ENCODE measurements at regions of chr10 and their contacts with region 1.

Region 1: GRCh38 chr10:79068562-79069324 is at the start of gene ZMIZ1:
- DNase-seq: peak; percentile 77
- H3K4me3 Mint-ChIP-seq: peak within 1 kb of the TSS; percentile 91
- H3K27ac Mint-ChIP-seq: peak within 1 kb of the TSS; percentile 86
- H3K4me1 Mint-ChIP-seq: peaks cover 43% of the 10 kb centered on the region
- H3K27me3 Mint-ChIP-seq: peaks cover 16% of the 10 kb centered on the region
- total RNA-seq, gene ZMIZ1: 67.6 and 67.8 TPM in 2 replicates

Region 2: DNA sequence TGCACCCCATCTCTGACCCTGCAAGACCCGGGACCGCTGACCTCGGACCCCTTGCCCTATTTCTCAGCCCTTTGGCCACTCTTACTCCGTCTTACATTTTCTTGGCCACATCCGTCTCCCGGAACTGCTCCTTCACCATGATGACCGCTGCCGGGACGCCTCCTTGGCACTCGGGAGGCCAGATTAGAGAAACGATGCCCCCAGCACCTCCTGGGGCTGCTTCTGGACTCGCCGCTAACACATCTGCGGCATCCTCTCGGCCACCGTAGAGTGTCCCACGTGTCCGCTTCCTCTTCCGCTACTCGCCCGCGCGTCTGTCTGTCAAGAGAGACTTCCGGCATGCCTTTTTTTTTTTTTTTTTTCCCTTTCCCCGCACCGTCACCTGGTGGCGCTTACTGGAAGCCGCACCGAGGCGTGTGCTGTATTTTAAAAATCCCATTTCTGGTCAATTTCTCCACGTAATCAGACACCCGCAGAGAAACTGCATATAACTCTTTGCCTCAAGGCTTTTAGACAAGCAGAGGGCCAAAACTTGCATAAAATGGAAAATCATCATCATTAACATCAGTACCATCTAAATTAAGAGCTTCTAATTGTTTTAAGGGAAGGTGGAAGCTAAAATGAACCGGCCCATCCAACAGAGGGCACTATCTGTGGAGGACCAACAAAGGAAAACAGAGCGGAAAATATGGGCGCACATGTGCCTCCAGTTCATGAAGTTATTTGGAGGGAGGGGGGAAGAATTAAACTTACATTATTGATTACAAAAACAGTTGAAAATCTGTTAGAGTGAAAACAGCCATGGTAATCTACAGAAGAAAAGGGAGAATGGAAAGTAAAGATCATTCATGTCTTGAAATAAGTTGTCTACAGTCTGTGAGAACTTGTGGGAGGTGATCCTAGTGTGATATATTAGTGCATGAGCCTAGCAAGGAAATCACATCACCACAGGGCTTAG is 1039.2 kb before region 1 on chr10 and contains the start of gene POLR3A:
- intact Hi-C with region 1: loop called (anchors 5 kb)
- DNase-seq: peak; percentile 89
- H3K4me3 Mint-ChIP-seq: peak within 1 kb of the TSS; percentile 99
- H3K27ac Mint-ChIP-seq: peak within 1 kb of the TSS; percentile 91
- H3K4me1 Mint-ChIP-seq: peaks cover 28% of the 10 kb centered on the region
- H3K27me3 Mint-ChIP-seq: no peaks in the 10 kb centered on the region
- total RNA-seq, gene POLR3A: 29.5 and 30.8 TPM in 2 replicates

Region 3: DNA sequence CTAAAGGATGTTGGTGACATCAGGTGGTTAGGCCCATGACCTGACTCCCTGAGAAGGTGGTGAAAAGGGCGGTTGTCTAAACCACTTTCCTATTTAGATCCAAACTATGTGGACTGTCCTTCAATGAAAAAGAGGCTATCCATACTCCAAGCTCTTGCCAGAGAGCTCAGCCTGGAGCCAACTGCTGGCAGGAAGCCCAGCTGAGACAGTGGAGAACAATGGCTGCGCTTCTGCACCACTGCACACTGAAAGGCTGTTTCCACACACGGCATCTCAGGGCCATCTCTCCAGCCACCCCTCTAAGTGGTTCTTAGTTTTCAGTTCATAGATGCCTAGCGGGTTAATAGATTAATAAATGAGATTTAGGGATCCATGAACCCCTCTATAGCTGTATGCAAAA is 488.7 kb before region 1 on chr10:
- intact Hi-C with region 1: loop called (anchors 1 kb)
- DNase-seq: no peak
- H3K4me3 Mint-ChIP-seq: no peak overlapping the region
- H3K27ac Mint-ChIP-seq: peak overlapping the region; percentile 92
- H3K4me1 Mint-ChIP-seq: peaks cover 17% of the 10 kb centered on the region
- H3K27me3 Mint-ChIP-seq: no peaks in the 10 kb centered on the region

Region 4: GRCh38 chr10:78830062-78830975 is 238.4 kb before region 1 on chr10:
- intact Hi-C with region 1: no loop called
- DNase-seq: no peak
- H3K4me3 Mint-ChIP-seq: no peak overlapping the region
- H3K27ac Mint-ChIP-seq: no peak overlapping the region
- H3K4me1 Mint-ChIP-seq: no peaks in the 10 kb centered on the region
- H3K27me3 Mint-ChIP-seq: peaks cover 4% of the 10 kb centered on the region

Region 5: DNA sequence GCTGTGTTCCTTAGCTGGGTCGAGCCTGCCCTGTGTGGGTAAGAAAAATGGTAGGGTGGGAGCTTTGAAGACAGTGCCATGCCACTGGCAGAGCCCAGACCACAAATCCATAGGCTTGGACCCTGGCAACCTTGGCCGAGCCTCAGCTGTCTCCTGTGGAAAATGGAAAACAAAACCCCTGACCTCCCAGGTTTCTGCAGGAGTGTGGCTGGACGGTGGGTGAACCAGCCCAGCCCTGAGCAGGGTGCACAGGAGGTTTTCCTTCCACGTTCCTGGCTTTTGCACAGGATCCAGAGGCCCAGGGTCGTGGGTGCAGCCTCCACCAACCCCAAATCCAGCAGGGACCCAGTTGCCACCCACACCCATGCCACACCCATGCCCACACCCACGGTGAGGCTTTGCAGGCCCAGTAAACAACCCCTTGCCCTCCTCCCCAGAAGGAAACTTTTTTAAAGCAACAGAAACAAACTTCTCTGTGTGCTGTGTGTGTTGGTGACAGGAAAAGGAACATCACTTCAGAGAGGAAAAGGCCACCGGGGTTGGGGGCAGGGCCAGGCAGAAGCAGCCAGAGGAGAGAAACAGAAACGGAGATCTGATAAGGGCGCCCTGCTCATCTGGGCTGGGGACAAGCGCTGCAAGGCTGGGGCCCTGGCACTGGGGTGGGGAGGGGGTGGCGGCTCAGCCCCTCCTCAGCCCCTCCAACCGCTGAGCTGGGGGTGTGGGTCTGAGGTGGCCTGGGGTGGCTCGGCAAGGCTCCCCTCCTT is 20.7 kb before region 1 on chr10:
- intact Hi-C with region 1: loop called (anchors 1 kb)
- DNase-seq: peak; percentile 68
- H3K4me3 Mint-ChIP-seq: peak overlapping the region; percentile 72
- H3K27ac Mint-ChIP-seq: peak overlapping the region; percentile 94
- H3K4me1 Mint-ChIP-seq: peaks cover 40% of the 10 kb centered on the region
- H3K27me3 Mint-ChIP-seq: peaks cover 7% of the 10 kb centered on the region

Region 6: DNA sequence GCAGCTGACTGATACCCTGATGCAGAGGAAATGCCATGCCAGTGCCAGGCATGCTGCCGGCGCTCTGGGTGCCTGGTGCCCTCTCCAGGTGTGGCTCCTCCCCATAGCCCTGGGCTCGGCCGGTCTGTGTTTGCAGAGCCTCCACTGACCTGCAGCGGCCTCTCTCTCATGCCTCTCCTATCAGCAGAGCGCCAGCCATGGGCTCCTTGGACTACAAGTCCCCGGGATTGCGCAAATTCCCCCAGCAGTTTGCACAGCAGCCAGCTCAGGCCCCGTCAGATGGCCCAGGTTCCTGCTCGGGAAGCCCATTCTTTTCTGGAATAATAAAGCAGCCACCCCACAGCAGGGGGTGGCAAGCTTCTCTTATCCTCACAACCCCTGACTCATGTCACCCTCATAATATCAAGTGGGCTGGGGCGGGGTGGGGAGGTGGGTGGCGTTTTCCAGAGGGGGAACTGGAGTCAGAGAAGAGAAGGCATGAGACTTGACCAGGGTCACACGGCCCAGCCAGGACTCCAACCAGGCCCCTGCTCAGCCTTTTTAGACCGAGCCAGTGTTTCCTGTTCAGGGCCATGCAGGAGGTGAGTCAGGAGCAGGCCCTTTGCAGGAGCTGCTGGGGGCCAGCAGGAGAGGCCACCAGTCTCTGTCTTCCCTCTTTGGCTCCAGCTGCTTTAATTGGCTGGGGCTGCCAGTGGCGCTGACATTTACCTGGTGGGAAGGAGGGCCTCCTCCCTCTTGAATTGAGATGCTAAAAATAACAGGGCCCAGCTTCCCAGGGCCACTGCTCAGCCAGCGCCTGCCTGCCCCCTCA is 58.6 kb after region 1 on chr10:
- intact Hi-C with region 1: no loop called
- DNase-seq: no peak
- H3K4me3 Mint-ChIP-seq: no peak overlapping the region
- H3K27ac Mint-ChIP-seq: no peak overlapping the region
- H3K4me1 Mint-ChIP-seq: no peaks in the 10 kb centered on the region
- H3K27me3 Mint-ChIP-seq: no peaks in the 10 kb centered on the region

Region 7: GRCh38 chr10:79149662-79150443 is 81.1 kb after region 1 on chr10:
- intact Hi-C with region 1: no loop called
- DNase-seq: peak; percentile 51
- H3K4me3 Mint-ChIP-seq: no peak overlapping the region
- H3K27ac Mint-ChIP-seq: peak overlapping the region; percentile 29
- H3K4me1 Mint-ChIP-seq: peaks cover 48% of the 10 kb centered on the region
- H3K27me3 Mint-ChIP-seq: no peaks in the 10 kb centered on the region

Region 8: DNA sequence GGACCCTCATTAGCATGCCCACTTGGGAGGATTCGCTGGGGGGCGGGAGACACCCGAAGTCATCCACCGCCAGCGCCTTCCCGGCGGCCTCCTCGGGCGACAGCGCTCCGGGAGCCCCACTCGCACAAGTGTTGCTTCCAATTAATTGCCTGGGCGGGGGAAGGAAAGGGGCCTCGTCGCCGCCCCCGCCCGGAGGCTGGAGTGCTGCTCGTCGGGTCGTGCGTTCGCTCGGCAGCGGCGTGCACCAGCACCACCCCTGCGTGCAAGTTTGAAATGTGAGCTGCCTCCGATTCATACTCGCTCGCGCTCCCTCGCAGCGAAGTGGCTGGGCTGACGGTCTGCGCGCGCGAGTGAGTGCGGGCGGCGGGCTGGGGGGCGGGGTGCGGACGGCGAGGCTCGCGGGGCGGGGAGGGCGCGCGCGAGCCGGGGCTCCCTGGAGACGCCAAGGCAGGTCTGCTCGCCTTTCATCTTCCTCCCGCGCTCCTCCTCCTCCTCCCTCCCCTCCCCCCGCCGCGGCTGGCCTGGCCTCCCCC is 173.9 kb after region 1 on chr10:
- intact Hi-C with region 1: loop called (anchors 1 kb)
- DNase-seq: peak; percentile 65
- H3K4me3 Mint-ChIP-seq: peak overlapping the region; percentile 81
- H3K27ac Mint-ChIP-seq: peak overlapping the region; percentile 83
- H3K4me1 Mint-ChIP-seq: peaks cover 71% of the 10 kb centered on the region
- H3K27me3 Mint-ChIP-seq: no peaks in the 10 kb centered on the region

Region 9: DNA sequence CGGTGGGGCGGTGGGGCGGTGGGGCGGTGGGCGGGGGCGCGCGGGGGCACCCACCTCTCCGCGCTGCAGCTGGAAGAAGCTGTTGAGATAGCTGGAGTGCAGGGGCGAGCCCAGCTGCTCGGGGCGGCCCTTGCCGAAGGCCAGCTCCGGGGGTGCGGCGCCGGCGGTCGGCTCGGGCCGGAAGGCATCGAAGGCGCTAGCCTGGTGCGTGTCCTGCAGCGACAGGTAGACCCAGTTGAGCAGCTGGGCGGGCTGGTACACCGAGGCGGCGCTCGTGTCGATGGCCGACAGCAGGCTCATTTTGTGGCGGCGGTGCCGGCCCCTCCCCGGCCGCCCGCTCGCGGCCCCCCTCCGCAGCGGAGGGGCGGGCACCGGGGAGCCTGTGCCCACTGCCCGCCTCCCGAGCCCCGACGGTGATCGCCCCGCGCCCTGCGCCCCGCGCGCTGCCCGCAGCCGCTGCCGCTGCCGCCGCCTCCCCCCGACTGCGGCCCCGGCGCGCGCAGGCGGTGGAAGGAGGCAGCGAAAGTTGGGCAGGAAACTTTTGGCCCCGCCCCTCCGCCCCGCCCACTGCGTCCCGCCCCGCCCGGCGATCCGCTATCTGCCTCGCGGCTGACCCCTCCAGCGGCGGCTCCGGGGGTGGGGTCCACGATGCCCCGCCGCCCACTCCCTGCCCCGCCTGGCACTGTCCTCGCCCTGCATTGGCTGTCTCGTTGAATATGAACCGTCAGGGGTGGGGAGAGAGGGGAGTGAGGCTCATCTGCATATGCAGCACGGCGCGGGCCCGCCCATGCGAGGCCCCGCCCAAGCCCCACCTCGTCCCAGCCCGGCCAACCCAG is 376.6 kb after region 1 on chr10 and contains the start of gene ZCCHC24:
- intact Hi-C with region 1: loop called (anchors 5 kb)
- DNase-seq: peak; percentile 91
- H3K4me3 Mint-ChIP-seq: peak within 1 kb of the TSS; percentile 87
- H3K27ac Mint-ChIP-seq: peak within 1 kb of the TSS; percentile 68
- H3K4me1 Mint-ChIP-seq: peaks cover 21% of the 10 kb centered on the region
- H3K27me3 Mint-ChIP-seq: peaks cover 56% of the 10 kb centered on the region
- total RNA-seq, gene ZCCHC24: 0.52 and 0.59 TPM in 2 replicates